Endothelial cell of umbilical vein (primary cell): ENCODE measurements at regions of chr1 and their contacts with region 1.

Region 1: DNA sequence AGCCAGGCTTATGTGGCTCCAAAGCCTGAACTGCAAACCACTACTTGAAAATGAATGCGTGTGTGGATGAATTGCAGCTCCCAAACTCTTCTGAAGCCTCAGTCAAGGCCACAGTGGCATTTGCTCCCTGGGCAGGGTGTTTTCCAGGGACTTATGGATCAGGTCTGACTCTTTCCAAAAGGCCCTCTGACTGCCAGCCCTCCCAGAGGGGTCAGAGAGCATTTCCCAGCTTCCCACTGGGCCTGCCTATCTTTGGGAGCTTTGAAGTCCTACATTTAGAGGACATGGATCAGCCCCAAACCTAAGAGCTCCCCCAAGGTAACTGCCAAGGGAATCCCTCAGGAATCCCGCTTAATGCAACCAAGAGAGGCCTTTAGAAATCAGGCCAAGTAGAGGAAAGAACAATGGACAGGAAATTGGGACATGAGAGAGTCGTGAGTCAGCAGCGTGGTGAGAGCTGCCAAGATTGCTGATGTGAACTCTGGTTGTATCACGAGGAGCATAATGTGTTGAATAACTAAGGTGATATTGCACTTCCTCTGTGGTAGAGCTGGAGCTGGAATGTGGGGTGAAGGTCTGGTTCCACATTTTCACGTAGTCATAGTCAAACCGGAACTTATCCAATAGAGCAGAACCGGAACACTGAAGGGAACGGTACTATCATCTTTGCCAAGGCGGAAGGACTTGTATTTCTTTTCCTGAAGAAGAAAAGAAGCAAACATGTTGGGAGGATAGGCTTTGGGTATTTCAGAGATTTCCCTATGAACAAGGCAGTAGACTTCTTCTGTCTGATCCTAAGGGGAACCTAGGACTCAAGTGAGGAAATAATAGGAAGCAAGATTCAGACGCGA is 99.4 kb upstream of the JUN start:
- DNase-seq: peak; percentile 99
- H3K4me3 ChIP-seq: no peak overlapping the region
- H3K27ac ChIP-seq: peak overlapping the region; percentile 99
- H3K4me1 ChIP-seq: peaks cover 42% of the 10 kb centered on the region
- H3K27me3 ChIP-seq: no peaks in the 10 kb centered on the region
- CTCF ChIP-seq: no peak
- POLR2A ChIP-seq: no peak

Region 2: DNA sequence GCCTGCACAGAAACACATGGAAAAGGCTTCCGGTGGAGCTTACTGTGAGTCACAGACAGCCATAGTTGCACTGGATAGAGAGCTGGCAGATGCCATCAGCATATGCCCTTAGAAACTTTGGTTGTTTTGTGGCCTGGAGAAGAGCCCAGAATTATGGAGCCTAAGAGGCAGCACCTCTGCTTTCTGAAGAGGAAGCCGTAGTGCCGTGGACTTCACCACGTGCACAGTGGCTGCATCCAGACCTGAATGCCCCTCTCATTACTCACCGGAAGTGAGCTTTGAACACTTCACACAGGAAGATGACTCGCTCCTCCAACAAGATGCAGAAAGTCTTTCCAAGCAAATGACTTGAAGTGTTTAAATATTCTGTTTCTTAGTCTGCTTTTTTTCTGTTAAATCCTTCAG is 127.8 kb before region 1 on chr1:
- CTCF ChIA-PET with region 1: interaction called, 3 read pairs
- POLR2A ChIA-PET with region 1: no interaction called
- dilution Hi-C with region 1: no loop called
- intact Hi-C with region 1: loop called (anchors 1 kb)
- DNase-seq: peak; percentile 99
- H3K4me3 ChIP-seq: peak overlapping the region in 1 of 3 experiments; percentile 18
- H3K27ac ChIP-seq: peak overlapping the region; percentile 96
- H3K4me1 ChIP-seq: peaks cover 40% of the 10 kb centered on the region
- H3K27me3 ChIP-seq: no peaks in the 10 kb centered on the region
- CTCF ChIP-seq: no peak
- POLR2A ChIP-seq: no peak

Region 3: GRCh38 chr1:58857680-58858673 is 25.3 kb before region 1 on chr1:
- CTCF ChIA-PET with region 1: interaction called, 21 read pairs
- POLR2A ChIA-PET with region 1: interaction called, 5 read pairs
- dilution Hi-C with region 1: no loop called
- intact Hi-C with region 1: loop called (anchors 1 kb)
- DNase-seq: no peak
- H3K4me3 ChIP-seq: no peak overlapping the region
- H3K27ac ChIP-seq: no peak overlapping the region
- H3K4me1 ChIP-seq: peaks cover 23% of the 10 kb centered on the region
- H3K27me3 ChIP-seq: no peaks in the 10 kb centered on the region
- CTCF ChIP-seq: no peak
- POLR2A ChIP-seq: no peak

Region 4: DNA sequence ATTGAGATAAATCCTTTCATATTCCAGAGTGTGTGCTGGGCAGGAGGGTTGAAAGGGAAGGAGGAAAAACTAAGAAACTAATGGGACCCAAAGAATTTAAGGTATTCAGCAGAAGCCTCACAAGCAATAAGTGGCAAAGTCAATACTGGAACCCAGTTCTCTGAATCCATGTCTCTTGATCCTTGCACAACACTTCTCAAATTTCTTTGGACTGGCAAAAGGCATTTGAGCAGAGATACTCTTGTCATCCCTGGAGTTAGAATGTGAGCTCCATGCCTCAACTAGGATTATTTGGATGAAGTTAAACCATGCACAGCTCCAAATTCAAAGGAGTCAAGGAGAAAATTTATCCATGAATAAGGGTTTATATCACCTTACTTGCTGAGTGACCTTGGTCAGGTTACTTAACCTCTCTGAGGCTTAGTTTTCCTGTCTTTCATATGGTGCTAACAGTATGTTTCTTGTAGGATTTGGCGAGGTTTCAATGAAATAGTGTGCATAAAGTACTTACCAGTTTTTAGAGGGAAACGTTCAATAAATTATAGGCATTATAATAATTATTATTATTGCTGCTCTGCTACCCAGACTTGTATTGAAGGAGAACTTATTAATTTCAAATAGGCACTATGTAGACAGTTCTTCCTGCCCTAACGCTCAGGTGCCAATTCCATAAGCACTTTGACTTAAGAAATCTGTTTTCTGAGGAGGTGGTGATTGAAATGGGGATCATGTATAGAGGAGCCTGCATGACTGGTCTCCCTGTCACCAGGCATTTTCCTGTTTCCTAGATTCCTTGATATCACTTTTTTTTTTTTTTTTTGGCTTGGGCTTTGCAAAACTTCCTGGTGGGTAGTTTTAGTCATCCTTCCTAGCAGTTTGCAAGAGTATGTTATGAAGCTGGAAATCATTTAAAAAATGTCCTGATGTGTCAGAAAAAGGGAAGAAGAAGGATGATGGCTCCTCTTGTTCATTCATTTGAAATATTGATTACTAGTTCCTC is 25.6 kb after region 1 on chr1:
- CTCF ChIA-PET with region 1: no interaction called
- POLR2A ChIA-PET with region 1: no interaction called
- dilution Hi-C with region 1: no loop called
- intact Hi-C with region 1: loop called (anchors 1 kb)
- DNase-seq: peak; percentile 89
- H3K4me3 ChIP-seq: no peak overlapping the region
- H3K27ac ChIP-seq: peak overlapping the region; percentile 64
- H3K4me1 ChIP-seq: peaks cover 35% of the 10 kb centered on the region
- H3K27me3 ChIP-seq: no peaks in the 10 kb centered on the region
- CTCF ChIP-seq: no peak
- POLR2A ChIP-seq: no peak

Region 5: GRCh38 chr1:59076612-59077011 is 193.3 kb after region 1 on chr1:
- CTCF ChIA-PET with region 1: interaction called, 3 read pairs
- POLR2A ChIA-PET with region 1: no interaction called
- dilution Hi-C with region 1: no loop called
- intact Hi-C with region 1: loop called (anchors 1 kb)
- DNase-seq: peak; percentile 60
- H3K4me3 ChIP-seq: no peak overlapping the region
- H3K27ac ChIP-seq: no peak overlapping the region
- H3K4me1 ChIP-seq: peaks cover 13% of the 10 kb centered on the region
- H3K27me3 ChIP-seq: no peaks in the 10 kb centered on the region
- CTCF ChIP-seq: peak in 1 of 2 donors; percentile 16
- POLR2A ChIP-seq: no peak

Region 6: GRCh38 chr1:59143133-59143487 is 259.8 kb after region 1 on chr1:
- CTCF ChIA-PET with region 1: no interaction called
- POLR2A ChIA-PET with region 1: no interaction called
- dilution Hi-C with region 1: no loop called
- intact Hi-C with region 1: loop called (anchors 5 kb)
- DNase-seq: peak; percentile 91
- H3K4me3 ChIP-seq: no peak overlapping the region
- H3K27ac ChIP-seq: peak overlapping the region; percentile 82
- H3K4me1 ChIP-seq: peaks cover 43% of the 10 kb centered on the region
- H3K27me3 ChIP-seq: no peaks in the 10 kb centered on the region
- CTCF ChIP-seq: no peak
- POLR2A ChIP-seq: peak; percentile 45

Region 7: GRCh38 chr1:59596441-59596861 is 713.2 kb after region 1 on chr1:
- CTCF ChIA-PET with region 1: no interaction called
- POLR2A ChIA-PET with region 1: no interaction called
- dilution Hi-C with region 1: no loop called
- intact Hi-C with region 1: loop called (anchors 5 kb)
- DNase-seq: peak; percentile 98
- H3K4me3 ChIP-seq: no peak overlapping the region
- H3K27ac ChIP-seq: peak overlapping the region; percentile 83
- H3K4me1 ChIP-seq: peaks cover 29% of the 10 kb centered on the region
- H3K27me3 ChIP-seq: no peaks in the 10 kb centered on the region
- CTCF ChIP-seq: no peak
- POLR2A ChIP-seq: no peak